ENCODE measurements at regions of chr22 and their contacts with region 1.

Region 1: DNA sequence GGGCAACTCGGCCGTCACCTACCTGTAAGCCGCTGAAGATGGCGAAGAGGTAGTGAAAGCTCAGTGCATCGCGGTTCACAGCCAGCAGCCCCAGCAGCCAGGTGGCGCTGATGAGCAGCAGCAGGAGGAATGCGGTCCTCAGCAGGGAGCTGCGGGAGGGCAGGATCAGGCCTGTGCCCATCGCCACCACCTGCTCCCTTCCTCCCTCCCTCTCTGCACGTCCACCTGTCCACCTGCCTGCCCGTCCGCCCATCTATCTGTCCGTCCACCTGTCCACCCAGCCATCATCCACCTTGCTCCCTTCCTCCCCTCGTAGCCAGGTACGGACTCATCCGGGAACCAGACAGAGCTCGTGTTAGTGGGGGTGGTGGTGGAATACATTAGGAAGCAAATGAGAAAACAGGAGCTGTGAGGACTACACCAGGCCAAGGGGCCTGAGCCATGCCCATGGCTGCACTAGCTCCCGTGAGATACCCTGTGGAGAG is 32.2 kb downstream of the TRMU start:
- DNase-seq: peak; percentile 58 to 78 (median 67)
- H3K4me3 ChIP-seq: no peak overlapping the region
- H3K4me3 Mint-ChIP-seq: peak overlapping the region in 5 of 7 donors; percentile 11 to 83 (median 67)
- H3K27ac ChIP-seq: no peak overlapping the region
- H3K27ac Mint-ChIP-seq: peak overlapping the region in 4 of 8 donors; percentile 53 to 90 (median 82)
- H3K4me1 ChIP-seq: peaks cover 30% of the 10 kb centered on the region
- H3K4me1 Mint-ChIP-seq: peaks cover 32 to 40% (median 33%) of the 10 kb centered on the region in 3 donors
- H3K27me3 ChIP-seq: no peaks in the 10 kb centered on the region
- H3K27me3 Mint-ChIP-seq: peaks cover 0 to 10% of the 10 kb centered on the region in 2 donors

Region 2: GRCh38 chr22:46355371-46355995 is 12.3 kb before region 1 on chr22:
- CTCF ChIA-PET with region 1: interaction called, 18 read pairs
- POLR2A ChIA-PET with region 1: no interaction called
- DNase-seq: peak; percentile 45 to 69 (median 53)
- H3K4me3 ChIP-seq: no peak overlapping the region
- H3K4me3 Mint-ChIP-seq: no peak overlapping the region
- H3K27ac ChIP-seq: no peak overlapping the region
- H3K27ac Mint-ChIP-seq: peak overlapping the region in 2 of 8 donors; percentile 46 to 89
- H3K4me1 ChIP-seq: no peaks in the 10 kb centered on the region
- H3K4me1 Mint-ChIP-seq: peaks cover 0 to 1% (median 0%) of the 10 kb centered on the region in 3 donors
- H3K27me3 ChIP-seq: no peaks in the 10 kb centered on the region
- H3K27me3 Mint-ChIP-seq: no peaks in the 10 kb centered on the region

Region 3: GRCh38 chr22:46386312-46386711 is 18.6 kb after region 1 on chr22:
- CTCF ChIA-PET with region 1: interaction called, 11 read pairs
- POLR2A ChIA-PET with region 1: no interaction called
- DNase-seq: no peak
- H3K4me3 ChIP-seq: no peak overlapping the region
- H3K4me3 Mint-ChIP-seq: no peak overlapping the region
- H3K27ac ChIP-seq: no peak overlapping the region
- H3K27ac Mint-ChIP-seq: no peak overlapping the region
- H3K4me1 ChIP-seq: no peaks in the 10 kb centered on the region
- H3K4me1 Mint-ChIP-seq: peaks cover 0 to 1% (median 0%) of the 10 kb centered on the region in 3 donors
- H3K27me3 ChIP-seq: no peaks in the 10 kb centered on the region
- H3K27me3 Mint-ChIP-seq: peaks cover 2 to 7% of the 10 kb centered on the region in 2 donors

Region 4: DNA sequence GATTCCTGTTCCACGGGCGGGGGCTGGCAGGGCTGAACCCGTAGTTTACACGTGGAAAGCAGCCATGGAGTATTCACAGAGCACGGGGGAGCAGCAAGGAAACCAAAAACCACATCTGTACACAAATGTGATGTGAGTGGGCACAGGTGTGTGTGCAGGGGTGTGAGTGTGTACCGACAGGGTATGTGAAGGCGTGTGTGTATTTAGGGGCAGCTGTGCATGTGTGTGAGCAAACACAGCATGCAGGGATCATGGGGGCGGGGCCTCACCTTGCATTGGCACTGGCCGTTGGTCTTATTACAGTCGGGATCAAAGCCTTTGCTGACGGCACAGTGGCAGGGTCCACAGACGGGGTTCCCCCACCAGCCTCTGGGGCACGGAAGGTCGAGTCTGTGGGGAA is 26.1 kb after region 1 on chr22:
- CTCF ChIA-PET with region 1: interaction called, 11 read pairs
- POLR2A ChIA-PET with region 1: no interaction called
- DNase-seq: peak in 1 of 5 donors; percentile 25
- H3K4me3 ChIP-seq: no peak overlapping the region
- H3K4me3 Mint-ChIP-seq: peak overlapping the region in 4 of 7 donors; percentile 30 to 41 (median 36)
- H3K27ac ChIP-seq: no peak overlapping the region
- H3K27ac Mint-ChIP-seq: peak overlapping the region in 2 of 8 donors; percentile 38 to 64
- H3K4me1 ChIP-seq: peaks cover 7% of the 10 kb centered on the region
- H3K4me1 Mint-ChIP-seq: peaks cover 7 to 9% (median 9%) of the 10 kb centered on the region in 3 donors
- H3K27me3 ChIP-seq: no peaks in the 10 kb centered on the region
- H3K27me3 Mint-ChIP-seq: peaks cover 3 to 12% of the 10 kb centered on the region in 2 donors

Region 5: GRCh38 chr22:46542011-46542985 is 174.5 kb after region 1 on chr22:
- CTCF ChIA-PET with region 1: interaction called, 46 read pairs
- POLR2A ChIA-PET with region 1: no interaction called
- DNase-seq: peak; percentile 59 to 80 (median 69)
- H3K4me3 ChIP-seq: no peak overlapping the region
- H3K4me3 Mint-ChIP-seq: peak overlapping the region in 1 of 7 donors; percentile 61
- H3K27ac ChIP-seq: no peak overlapping the region
- H3K27ac Mint-ChIP-seq: no peak overlapping the region
- H3K4me1 ChIP-seq: no peaks in the 10 kb centered on the region
- H3K4me1 Mint-ChIP-seq: peaks cover 8 to 12% (median 12%) of the 10 kb centered on the region in 3 donors
- H3K27me3 ChIP-seq: peaks cover 13% of the 10 kb centered on the region
- H3K27me3 Mint-ChIP-seq: peaks cover 29 to 46% of the 10 kb centered on the region in 2 donors

Region 6: GRCh38 chr22:46798366-46799350 is 430.9 kb after region 1 on chr22:
- CTCF ChIA-PET with region 1: no interaction called
- POLR2A ChIA-PET with region 1: no interaction called
- DNase-seq: peak; percentile 51 to 77 (median 59)
- H3K4me3 ChIP-seq: no peak overlapping the region
- H3K4me3 Mint-ChIP-seq: no peak overlapping the region
- H3K27ac ChIP-seq: no peak overlapping the region
- H3K27ac Mint-ChIP-seq: peak overlapping the region; percentile 47 to 97 (median 89)
- H3K4me1 ChIP-seq: peaks cover 14% of the 10 kb centered on the region
- H3K4me1 Mint-ChIP-seq: peaks cover 19 to 47% (median 30%) of the 10 kb centered on the region in 3 donors
- H3K27me3 ChIP-seq: no peaks in the 10 kb centered on the region
- H3K27me3 Mint-ChIP-seq: no peaks in the 10 kb centered on the region

Measured in CD8-positive, alpha-beta memory T cell (primary cell).